ENCODE measurements at regions of chr2 and their contacts with region 1.

Region 1: GRCh38 chr2:229800997-229801754 is 86.8 kb upstream of the DNER start:
- H3K4me3 ChIP-seq: no peak overlapping the region
- H3K27ac ChIP-seq: no peak overlapping the region
- H3K4me1 ChIP-seq: no peaks in the 10 kb centered on the region
- CTCF ChIP-seq: peak; percentile 45

Region 2: DNA sequence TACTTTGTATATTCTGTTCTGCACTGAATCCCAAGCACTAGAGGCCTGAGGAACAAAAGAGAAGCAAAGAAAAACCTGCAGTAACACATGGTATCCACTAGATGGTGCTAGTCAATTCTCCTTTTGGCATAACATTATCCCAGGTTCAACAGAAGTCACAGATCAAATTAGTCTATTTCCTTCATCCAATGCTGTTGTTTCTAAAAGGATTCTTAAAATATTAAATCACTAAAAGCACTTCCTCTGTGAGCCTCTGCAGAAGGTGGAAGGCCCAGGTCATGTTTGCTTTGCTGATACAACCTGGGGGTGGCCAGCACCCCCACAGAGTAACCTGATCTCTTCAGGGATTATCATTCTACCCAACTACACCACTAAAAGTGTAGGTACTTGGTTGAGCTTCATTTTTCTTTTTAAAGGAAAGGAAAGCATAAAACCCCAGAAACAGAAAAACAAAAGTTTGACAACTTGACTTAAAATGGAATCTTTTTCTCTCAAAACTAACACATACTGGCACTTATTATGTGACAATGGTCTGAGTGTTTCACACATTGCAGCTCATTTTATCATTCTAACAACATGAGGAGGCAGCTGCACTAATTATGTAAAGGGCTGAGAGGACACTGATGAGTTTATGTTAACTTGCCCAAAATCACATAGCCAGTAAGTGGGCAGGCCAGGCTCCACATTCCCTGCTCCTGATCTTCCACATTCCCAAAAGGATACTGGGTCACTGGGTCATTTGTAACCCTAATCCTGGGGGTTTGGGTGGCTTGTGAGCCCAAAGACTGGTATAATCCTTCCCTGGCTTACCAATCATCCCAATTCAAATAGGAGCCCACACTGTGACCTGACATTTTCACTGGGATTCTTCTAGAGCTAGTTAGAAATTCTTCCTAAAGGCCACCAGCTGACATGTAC is 20.1 kb before region 1 on chr2:
- CTCF ChIA-PET with region 1: interaction called, 27 read pairs
- POLR2A ChIA-PET with region 1: no interaction called
- H3K4me3 ChIP-seq: no peak overlapping the region
- H3K27ac ChIP-seq: no peak overlapping the region; the same call in 1 of the 2 replicates
- H3K4me1 ChIP-seq: no peaks in the 10 kb centered on the region
- CTCF ChIP-seq: no peak; the same call in 1 of the 2 replicates

Region 3: GRCh38 chr2:229815858-229816257 is 14.7 kb after region 1 on chr2:
- CTCF ChIA-PET with region 1: interaction called, 11 read pairs
- POLR2A ChIA-PET with region 1: no interaction called
- H3K4me3 ChIP-seq: no peak overlapping the region
- H3K27ac ChIP-seq: no peak overlapping the region
- H3K4me1 ChIP-seq: no peaks in the 10 kb centered on the region
- CTCF ChIP-seq: no peak

Region 4: DNA sequence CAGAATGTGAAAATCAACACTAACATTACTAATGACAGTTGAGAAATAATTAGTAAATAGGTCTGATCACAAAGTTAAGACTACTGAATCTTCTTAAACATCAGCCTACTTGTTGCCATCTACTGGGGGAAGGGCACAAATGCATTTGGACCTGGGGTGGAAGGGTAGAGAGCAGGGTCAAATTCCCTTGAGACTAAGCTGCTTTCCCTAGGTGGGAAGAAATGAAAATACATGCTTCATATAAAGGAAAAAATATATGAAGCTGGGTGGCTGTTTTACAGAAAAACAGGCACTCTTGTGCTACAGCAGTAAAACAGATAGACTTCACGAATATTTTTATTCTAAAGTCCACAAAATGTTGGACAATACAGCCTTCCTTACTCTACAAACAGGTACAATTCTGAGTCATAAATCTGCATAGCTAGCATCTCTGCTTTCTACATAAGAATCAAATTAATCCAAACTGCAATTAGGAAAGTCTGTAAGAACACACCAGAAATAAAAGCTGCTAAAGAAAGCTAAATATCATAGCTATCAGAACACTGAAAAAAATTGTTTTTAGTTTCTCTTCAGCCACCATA is 109.7 kb after region 1 on chr2:
- CTCF ChIA-PET with region 1: interaction called, 20 read pairs
- POLR2A ChIA-PET with region 1: interaction called, 3 read pairs
- H3K4me3 ChIP-seq: no peak overlapping the region
- H3K27ac ChIP-seq: no peak overlapping the region
- H3K4me1 ChIP-seq: peaks cover 23% of the 10 kb centered on the region
- CTCF ChIP-seq: peak; percentile 25; the same call in 1 of the 2 replicates

Measured in HEK293 (cell line).